ENCODE measurements at regions of chr2 and their contacts with region 1.

Region 1: GRCh38 chr2:210617732-210618330 is 61.4 kb downstream of the CPS1 start:
- DNase-seq: peak; percentile 13
- ATAC-seq: peak; percentile 76; the same call in 1 of the 2 replicates
- H3K4me3 ChIP-seq: no peak overlapping the region
- H3K27ac ChIP-seq: no peak overlapping the region
- H3K4me1 ChIP-seq: no peaks in the 10 kb centered on the region
- H3K27me3 ChIP-seq: no peaks in the 10 kb centered on the region
- CTCF ChIP-seq: peak; percentile 66; the same call in 1 of the 2 replicates

Region 2: GRCh38 chr2:211035548-211036185 is 417.8 kb after region 1 on chr2:
- CTCF ChIA-PET with region 1: no interaction called
- POLR2A ChIA-PET with region 1: no interaction called
- in situ Hi-C with region 1: no loop called
- intact Hi-C with region 1: loop called (anchors 2 kb)
- DNase-seq: no peak
- ATAC-seq: no peak
- H3K4me3 ChIP-seq: no peak overlapping the region
- H3K27ac ChIP-seq: no peak overlapping the region
- H3K4me1 ChIP-seq: no peaks in the 10 kb centered on the region
- H3K27me3 ChIP-seq: no peaks in the 10 kb centered on the region
- CTCF ChIP-seq: peak; percentile 34; the same call in 1 of the 2 replicates

Region 3: DNA sequence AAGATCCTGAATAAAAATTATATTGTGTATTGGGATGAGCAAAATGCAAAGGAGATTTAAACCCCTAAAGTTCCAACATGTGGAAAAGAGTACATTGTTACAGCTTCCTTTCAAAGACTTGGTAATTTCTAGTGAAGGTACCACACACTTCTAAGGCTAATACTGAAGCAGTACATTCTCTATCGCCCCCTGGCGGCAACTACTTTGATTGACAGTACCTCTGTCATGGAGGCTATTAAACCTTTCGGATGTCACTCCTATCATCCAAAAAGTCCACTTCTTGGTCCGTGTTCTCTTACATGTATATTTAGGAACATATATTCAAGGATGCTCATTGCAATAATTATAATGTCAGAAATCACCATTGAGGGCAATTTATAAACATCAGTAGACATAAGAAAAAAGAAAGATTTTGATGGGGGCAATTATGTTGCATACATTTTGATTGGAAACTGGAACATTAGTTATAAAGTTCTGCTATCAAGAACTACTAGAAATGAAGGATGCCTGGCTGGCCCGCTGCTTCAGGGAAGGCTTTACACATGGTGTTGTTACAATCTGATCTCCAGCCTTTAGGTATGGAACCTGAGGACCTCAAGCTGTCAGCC is 540.1 kb after region 1 on chr2:
- CTCF ChIA-PET with region 1: interaction called, 4 read pairs
- POLR2A ChIA-PET with region 1: no interaction called
- in situ Hi-C with region 1: no loop called
- intact Hi-C with region 1: loop called (anchors 5 kb)
- DNase-seq: peak; percentile 20
- ATAC-seq: peak; percentile 86; the same call in 1 of the 2 replicates
- H3K4me3 ChIP-seq: no peak overlapping the region
- H3K27ac ChIP-seq: no peak overlapping the region
- H3K4me1 ChIP-seq: no peaks in the 10 kb centered on the region
- H3K27me3 ChIP-seq: no peaks in the 10 kb centered on the region
- CTCF ChIP-seq: peak; percentile 78; the same call in 1 of the 2 replicates

Measured in Panc1 (cell line).